MCF 10A (cell line): ENCODE measurements at regions of chr12 and their contacts with region 1.

Region 1: GRCh38 chr12:4320853-4321701 is at the start of gene TIGAR:
- DNase-seq: peak; percentile 94
- H3K4me3 Mint-ChIP-seq: peak within 1 kb of the TSS; percentile 98
- H3K27ac Mint-ChIP-seq: peak within 1 kb of the TSS; percentile 84
- H3K4me1 Mint-ChIP-seq: peaks cover 19% of the 10 kb centered on the region
- H3K27me3 Mint-ChIP-seq: no peaks in the 10 kb centered on the region
- CTCF ChIP-seq: no peak
- total RNA-seq, gene TIGAR: 44.0 and 45.8 TPM in 2 replicates

Region 2: DNA sequence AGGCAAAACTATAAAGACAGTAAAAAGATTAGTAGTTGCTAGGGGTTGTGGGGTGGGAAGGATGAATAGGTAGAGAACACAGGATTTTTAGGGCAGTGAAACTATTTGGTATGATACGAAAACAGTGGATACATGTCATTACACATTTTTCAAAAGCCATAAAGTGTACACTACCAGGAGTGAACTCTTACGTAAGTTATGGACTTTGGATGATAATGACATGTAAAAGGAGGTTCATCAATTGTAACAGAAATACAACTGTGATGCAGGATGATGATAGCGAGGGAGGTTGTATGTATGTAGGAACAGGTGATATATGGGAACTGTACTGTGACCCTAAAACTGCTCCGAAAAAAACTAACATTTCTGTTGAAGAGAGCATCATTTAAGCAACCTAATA is 139.7 kb after region 1 on chr12:
- CTCF ChIA-PET with region 1: no interaction called
- POLR2A ChIA-PET with region 1: no interaction called
- intact Hi-C with region 1: no loop called
- DNase-seq: no peak
- H3K4me3 Mint-ChIP-seq: no peak overlapping the region
- H3K27ac Mint-ChIP-seq: no peak overlapping the region
- H3K4me1 Mint-ChIP-seq: no peaks in the 10 kb centered on the region
- H3K27me3 Mint-ChIP-seq: peaks cover 30% of the 10 kb centered on the region
- CTCF ChIP-seq: no peak

Region 3: DNA sequence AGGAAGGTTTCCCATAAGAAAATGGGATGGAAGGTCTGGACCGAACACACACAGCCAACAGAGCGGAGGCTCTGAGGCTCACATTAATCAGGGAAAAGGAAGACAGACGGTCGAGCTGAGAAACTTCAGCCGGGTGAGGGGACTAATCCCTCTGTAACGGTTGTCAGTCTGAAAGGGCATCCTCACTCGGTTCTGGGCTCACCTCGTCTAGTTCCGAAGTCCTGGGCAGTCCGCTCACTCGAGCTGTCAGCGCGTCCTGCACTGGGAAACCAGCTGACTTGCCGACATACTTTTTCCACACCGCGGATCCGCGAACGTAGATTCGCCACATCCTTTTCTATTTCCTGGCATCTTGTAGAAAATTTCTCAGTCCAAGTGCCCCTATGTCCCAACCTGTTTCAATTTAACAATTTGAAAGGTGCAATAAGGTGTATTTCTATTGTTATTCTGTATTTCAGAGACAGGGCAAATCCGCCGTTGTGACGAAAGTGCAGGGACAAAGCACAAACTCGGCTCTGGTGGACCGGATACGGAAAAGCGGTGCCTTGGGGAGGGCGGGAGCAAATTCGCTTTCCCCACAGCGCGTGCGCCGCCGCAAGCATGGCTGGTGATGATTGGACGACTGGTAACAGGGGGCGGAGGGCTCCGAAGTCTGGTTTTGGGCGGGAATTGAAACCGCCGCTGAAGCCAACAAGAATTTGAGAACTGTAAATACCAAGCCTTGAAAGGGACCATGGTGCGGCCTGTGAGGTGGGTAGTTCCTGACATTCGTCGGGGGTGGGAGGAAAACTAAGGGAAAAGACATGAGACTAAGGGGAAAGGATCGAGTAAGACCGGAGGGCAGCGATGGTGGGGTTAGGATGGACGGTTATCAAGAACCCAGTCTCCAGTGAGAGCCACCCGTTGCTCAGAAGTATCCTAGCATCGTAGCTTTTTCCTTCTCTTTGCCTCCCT is 217.4 kb after region 1 on chr12 and contains the start of gene RAD51AP1:
- CTCF ChIA-PET with region 1: no interaction called
- POLR2A ChIA-PET with region 1: interaction called, 5 read pairs
- intact Hi-C with region 1: loop called (anchors 1 kb)
- DNase-seq: peak; percentile 96
- H3K4me3 Mint-ChIP-seq: peak within 1 kb of the TSS; percentile 100
- H3K27ac Mint-ChIP-seq: peak within 1 kb of the TSS; percentile 99
- H3K4me1 Mint-ChIP-seq: peaks cover 23% of the 10 kb centered on the region
- H3K27me3 Mint-ChIP-seq: no peaks in the 10 kb centered on the region
- CTCF ChIP-seq: no peak
- total RNA-seq, gene RAD51AP1: 7.1 and 10.8 TPM in 2 replicates

Region 4: GRCh38 chr12:4562034-4562657 is 241.1 kb after region 1 on chr12 and contains the start of gene DYRK4:
- CTCF ChIA-PET with region 1: no interaction called
- POLR2A ChIA-PET with region 1: no interaction called
- intact Hi-C with region 1: no loop called
- DNase-seq: no peak
- H3K4me3 Mint-ChIP-seq: no peak within 1 kb of the TSS
- H3K27ac Mint-ChIP-seq: no peak within 1 kb of the TSS
- H3K4me1 Mint-ChIP-seq: no peaks in the 10 kb centered on the region
- H3K27me3 Mint-ChIP-seq: no peaks in the 10 kb centered on the region
- CTCF ChIP-seq: no peak
- total RNA-seq, gene DYRK4: 77.9 and 87.1 TPM in 2 replicates

Region 5: GRCh38 chr12:4866299-4866698 is 545.2 kb after region 1 on chr12:
- CTCF ChIA-PET with region 1: no interaction called
- POLR2A ChIA-PET with region 1: no interaction called
- intact Hi-C with region 1: no loop called
- DNase-seq: no peak
- H3K4me3 Mint-ChIP-seq: no peak overlapping the region
- H3K27ac Mint-ChIP-seq: no peak overlapping the region
- H3K4me1 Mint-ChIP-seq: no peaks in the 10 kb centered on the region
- H3K27me3 Mint-ChIP-seq: peaks cover 17% of the 10 kb centered on the region
- CTCF ChIP-seq: no peak